MCF 10A (cell line): ENCODE measurements at regions of chr12 and their contacts with region 1.

Region 1: GRCh38 chr12:126069549-126070165 is 1004.4 kb downstream of the AACS start:
- DNase-seq: peak; percentile 82
- H3K4me3 Mint-ChIP-seq: no peak overlapping the region
- H3K27ac Mint-ChIP-seq: peak overlapping the region; percentile 8
- H3K4me1 Mint-ChIP-seq: no peaks in the 10 kb centered on the region
- H3K27me3 Mint-ChIP-seq: no peaks in the 10 kb centered on the region
- CTCF ChIP-seq: peak; percentile 74

Region 2: DNA sequence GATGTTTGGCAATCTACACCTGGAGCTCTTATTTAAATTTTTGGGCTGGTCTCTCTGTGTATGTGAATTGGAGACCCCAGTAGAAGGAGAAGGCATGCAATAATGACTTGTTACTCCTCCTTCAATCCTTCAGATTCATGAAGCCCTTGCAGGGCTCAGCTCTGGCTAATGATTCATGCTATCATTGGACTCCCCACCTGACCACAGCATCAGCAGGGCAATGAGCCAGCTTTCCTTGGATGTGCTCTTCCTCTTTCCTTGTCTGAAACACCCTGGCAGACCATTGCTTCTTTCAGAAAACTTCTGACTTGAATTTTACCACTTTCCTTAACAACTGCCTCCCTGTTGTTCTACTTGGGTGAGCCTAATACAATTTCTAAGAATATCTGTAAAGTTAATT is 14.8 kb after region 1 on chr12:
- CTCF ChIA-PET with region 1: interaction called, 14 read pairs
- POLR2A ChIA-PET with region 1: no interaction called
- intact Hi-C with region 1: no loop called
- DNase-seq: peak; percentile 47
- H3K4me3 Mint-ChIP-seq: no peak overlapping the region
- H3K27ac Mint-ChIP-seq: no peak overlapping the region
- H3K4me1 Mint-ChIP-seq: no peaks in the 10 kb centered on the region
- H3K27me3 Mint-ChIP-seq: no peaks in the 10 kb centered on the region
- CTCF ChIP-seq: no peak

Region 3: DNA sequence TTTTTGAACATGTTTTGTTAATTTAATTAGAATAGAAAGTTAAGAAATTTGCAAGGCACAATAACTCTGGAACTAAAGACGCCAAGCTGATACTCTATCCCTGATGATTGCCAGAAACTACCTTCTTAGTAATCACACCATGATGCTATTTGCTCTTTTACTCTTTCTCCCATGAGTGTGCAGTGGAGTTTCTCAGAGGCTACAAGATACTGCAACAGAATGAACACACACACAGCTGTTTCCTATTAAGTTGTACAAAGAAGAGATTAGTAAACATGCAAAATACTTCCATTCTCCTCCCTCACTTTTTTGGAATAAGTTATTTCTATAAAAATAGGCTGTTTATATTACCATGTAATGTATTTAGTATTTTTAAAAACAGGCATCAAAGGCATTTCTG is 363.1 kb after region 1 on chr12:
- CTCF ChIA-PET with region 1: no interaction called
- POLR2A ChIA-PET with region 1: no interaction called
- intact Hi-C with region 1: no loop called
- DNase-seq: no peak
- H3K4me3 Mint-ChIP-seq: no peak overlapping the region
- H3K27ac Mint-ChIP-seq: no peak overlapping the region
- H3K4me1 Mint-ChIP-seq: no peaks in the 10 kb centered on the region
- H3K27me3 Mint-ChIP-seq: no peaks in the 10 kb centered on the region
- CTCF ChIP-seq: no peak

Region 4: GRCh38 chr12:126617312-126617711 is 547.7 kb after region 1 on chr12:
- CTCF ChIA-PET with region 1: interaction called, 7 read pairs
- POLR2A ChIA-PET with region 1: no interaction called
- intact Hi-C with region 1: loop called (anchors 1 kb)
- DNase-seq: peak; percentile 62
- H3K4me3 Mint-ChIP-seq: no peak overlapping the region
- H3K27ac Mint-ChIP-seq: no peak overlapping the region
- H3K4me1 Mint-ChIP-seq: peaks cover 5% of the 10 kb centered on the region
- H3K27me3 Mint-ChIP-seq: no peaks in the 10 kb centered on the region
- CTCF ChIP-seq: peak; percentile 78

Region 5: DNA sequence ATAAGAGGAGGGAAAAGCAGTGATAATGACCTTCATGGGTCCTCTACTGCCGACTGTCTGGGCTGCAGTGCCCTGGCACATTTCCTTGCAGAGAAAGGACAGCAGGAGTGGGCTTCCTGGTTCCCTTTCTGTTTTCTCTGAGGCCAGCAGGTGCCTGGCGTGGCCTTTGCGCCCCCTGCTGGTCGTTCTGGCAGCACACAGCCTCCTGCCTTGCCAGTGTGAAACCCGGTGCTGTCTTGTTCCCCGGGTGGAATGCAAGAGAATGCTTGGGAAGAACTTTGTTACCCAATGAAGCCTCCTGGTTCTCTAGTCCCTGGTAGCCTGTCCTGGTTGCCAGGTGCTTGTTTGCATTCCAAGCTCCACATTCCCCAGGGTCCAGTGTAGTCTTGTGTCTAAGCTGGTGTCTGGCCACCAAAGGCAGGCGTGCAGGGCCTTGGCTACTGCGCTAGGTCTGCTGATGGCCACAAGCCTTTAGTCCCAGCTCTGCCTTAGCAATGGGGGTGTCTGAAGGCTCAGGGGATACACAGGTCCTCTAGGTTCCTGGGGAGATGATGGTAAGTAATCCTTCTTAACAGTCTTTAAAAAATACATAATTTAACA is 804.9 kb after region 1 on chr12:
- CTCF ChIA-PET with region 1: interaction called, 49 read pairs
- POLR2A ChIA-PET with region 1: no interaction called
- intact Hi-C with region 1: loop called (anchors 1 kb)
- DNase-seq: peak; percentile 60
- H3K4me3 Mint-ChIP-seq: no peak overlapping the region
- H3K27ac Mint-ChIP-seq: no peak overlapping the region
- H3K4me1 Mint-ChIP-seq: no peaks in the 10 kb centered on the region
- H3K27me3 Mint-ChIP-seq: no peaks in the 10 kb centered on the region
- CTCF ChIP-seq: peak; percentile 94

Region 6: DNA sequence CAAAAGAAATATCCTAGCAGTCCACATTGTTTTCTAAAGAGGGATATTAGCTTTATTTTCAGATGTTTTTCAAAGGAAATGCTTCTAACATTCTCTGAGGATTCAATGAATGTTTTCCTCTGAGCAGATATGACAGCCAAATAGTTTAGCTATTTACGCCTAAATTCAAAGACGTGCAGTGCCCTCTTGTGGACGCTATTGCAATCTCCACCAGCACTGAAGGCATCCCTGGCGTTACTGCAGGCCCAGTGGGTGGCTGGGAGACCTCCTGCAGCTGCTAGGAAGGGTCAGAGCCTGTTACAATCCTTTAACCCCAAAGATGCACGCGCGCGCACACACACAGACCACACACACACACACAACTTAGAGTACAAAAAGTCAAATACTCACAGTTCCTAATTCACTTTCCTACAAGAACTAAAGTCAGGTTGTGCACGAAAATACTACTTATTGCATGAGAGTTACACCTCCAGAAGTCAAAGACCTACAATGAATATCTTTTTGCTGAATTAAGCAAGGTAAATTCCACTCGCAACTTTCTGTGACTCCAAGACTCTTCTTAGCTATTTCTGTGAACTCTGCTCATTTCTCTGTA is 1608.0 kb after region 1 on chr12:
- CTCF ChIA-PET with region 1: no interaction called
- POLR2A ChIA-PET with region 1: no interaction called
- intact Hi-C with region 1: loop called (anchors 10 kb)
- DNase-seq: peak; percentile 75
- H3K4me3 Mint-ChIP-seq: no peak overlapping the region
- H3K27ac Mint-ChIP-seq: no peak overlapping the region
- H3K4me1 Mint-ChIP-seq: no peaks in the 10 kb centered on the region
- H3K27me3 Mint-ChIP-seq: no peaks in the 10 kb centered on the region
- CTCF ChIP-seq: peak; percentile 53